B cell (primary cell): ENCODE measurements at regions of chr11 and their contacts with region 1.

Region 1: GRCh38 chr11:269146-269890 is 8.9 kb upstream of the NLRP6 start:
- DNase-seq: peak; percentile 96
- ATAC-seq: peak; percentile 66
- H3K4me3 ChIP-seq: peak overlapping the region; percentile 62 to 85 (median 72)
- H3K4me3 Mint-ChIP-seq: peak overlapping the region; percentile 91
- H3K27ac ChIP-seq: peak overlapping the region; percentile 96 to 98
- H3K27ac Mint-ChIP-seq: peak overlapping the region; percentile 94
- H3K4me1 ChIP-seq: peaks cover 25 to 32% of the 10 kb centered on the region in 2 donors
- H3K4me1 Mint-ChIP-seq: peaks cover 34% of the 10 kb centered on the region
- H3K27me3 ChIP-seq: no peaks in the 10 kb centered on the region
- H3K27me3 Mint-ChIP-seq: no peaks in the 10 kb centered on the region
- CTCF ChIP-seq: peak; percentile 33

Region 2: DNA sequence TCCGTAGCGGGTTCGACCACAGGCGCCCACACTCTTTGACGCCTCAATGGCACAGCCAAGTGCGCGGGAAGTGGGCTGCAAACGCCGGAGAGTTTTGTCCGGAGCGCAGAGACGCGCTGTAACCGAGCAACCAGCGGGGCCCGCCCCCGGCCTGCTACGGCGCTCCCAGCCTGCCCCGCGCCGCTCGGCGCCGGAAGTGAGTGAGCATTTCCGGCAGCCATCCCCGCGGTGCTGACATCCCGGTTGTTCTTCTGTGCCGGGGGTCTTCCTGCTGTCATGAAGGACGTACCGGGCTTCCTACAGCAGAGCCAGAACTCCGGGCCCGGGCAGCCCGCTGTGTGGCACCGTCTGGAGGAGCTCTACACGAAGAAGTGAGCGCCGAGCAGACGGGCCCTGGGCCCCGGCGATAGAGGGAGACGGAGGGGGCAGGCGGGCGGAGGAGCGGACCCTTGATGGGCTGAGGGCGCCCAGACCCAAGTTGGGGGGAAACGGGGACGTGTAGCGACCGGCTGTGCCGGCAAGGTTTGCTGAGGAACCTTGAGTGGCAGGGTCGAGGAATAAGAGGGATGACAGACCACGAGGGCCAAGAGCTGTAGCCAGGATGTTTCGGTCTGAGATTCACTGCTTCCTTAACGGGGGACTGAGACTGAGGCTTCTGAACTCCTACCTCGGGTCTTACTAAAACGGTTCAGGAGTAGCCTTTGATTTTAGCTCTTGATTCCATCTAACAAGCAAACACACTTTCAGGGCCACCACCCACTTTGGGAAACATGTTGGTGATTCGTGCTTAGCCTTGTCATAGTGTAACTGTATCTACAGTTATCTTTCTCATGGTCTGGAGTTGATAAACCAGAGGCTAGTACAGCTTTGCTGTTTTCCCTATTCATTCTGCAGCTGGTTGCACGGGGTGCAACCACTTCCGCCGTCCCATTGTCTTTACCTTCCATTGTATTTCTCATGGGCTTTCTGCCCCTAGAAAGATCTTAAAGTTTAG is 32.2 kb before region 1 on chr11 and contains the start of gene PSMD13:
- CTCF ChIA-PET with region 1: no interaction called
- POLR2A ChIA-PET with region 1: interaction called, 12 read pairs
- intact Hi-C with region 1: loop called (anchors 1 kb)
- DNase-seq: peak; percentile 91
- ATAC-seq: peak; percentile 77
- H3K4me3 ChIP-seq: peak within 1 kb of the TSS; percentile 89 to 98 (median 95)
- H3K4me3 Mint-ChIP-seq: peak within 1 kb of the TSS; percentile 99
- H3K27ac ChIP-seq: peak within 1 kb of the TSS; percentile 94 to 99
- H3K27ac Mint-ChIP-seq: peak within 1 kb of the TSS; percentile 100
- H3K4me1 ChIP-seq: peaks cover 18 to 22% of the 10 kb centered on the region in 2 donors
- H3K4me1 Mint-ChIP-seq: peaks cover 38% of the 10 kb centered on the region
- H3K27me3 ChIP-seq: no peaks in the 10 kb centered on the region
- H3K27me3 Mint-ChIP-seq: no peaks in the 10 kb centered on the region
- CTCF ChIP-seq: no peak
- total RNA-seq, gene PSMD13: 96.2 and 104 TPM in 2 replicates

Region 3: DNA sequence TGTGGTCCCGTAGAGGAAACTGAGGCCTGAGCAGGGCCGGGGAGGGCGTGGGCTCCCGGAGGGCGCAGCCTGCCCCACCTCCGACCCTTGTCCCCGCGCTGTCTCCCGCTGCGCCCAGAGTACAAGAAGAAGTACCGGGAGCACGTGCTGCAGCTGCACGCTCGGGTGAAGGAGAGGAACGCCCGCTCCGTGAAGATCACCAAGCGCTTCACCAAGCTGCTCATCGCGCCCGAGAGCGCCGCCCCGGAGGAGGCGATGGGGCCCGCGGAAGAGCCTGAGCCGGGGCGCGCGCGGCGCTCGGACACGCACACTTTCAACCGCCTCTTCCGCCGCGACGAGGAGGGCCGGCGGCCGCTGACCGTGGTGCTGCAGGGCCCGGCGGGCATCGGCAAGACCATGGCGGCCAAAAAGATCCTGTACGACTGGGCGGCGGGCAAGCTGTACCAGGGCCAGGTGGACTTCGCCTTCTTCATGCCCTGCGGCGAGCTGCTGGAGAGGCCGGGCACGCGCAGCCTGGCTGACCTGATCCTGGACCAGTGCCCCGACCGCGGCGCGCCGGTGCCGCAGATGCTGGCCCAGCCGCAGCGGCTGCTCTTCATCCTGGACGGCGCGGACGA is 10.8 kb after region 1 on chr11:
- CTCF ChIA-PET with region 1: interaction called, 17 read pairs
- POLR2A ChIA-PET with region 1: interaction called, 19 read pairs
- intact Hi-C with region 1: loop called (anchors 1 kb)
- DNase-seq: peak; percentile 81
- ATAC-seq: peak; percentile 69
- H3K4me3 ChIP-seq: peak overlapping the region in 4 of 5 experiments; percentile 29 to 57 (median 45)
- H3K4me3 Mint-ChIP-seq: peak overlapping the region; percentile 85
- H3K27ac ChIP-seq: no peak overlapping the region
- H3K27ac Mint-ChIP-seq: peak overlapping the region; percentile 81
- H3K4me1 ChIP-seq: peaks cover 36 to 39% of the 10 kb centered on the region in 2 donors
- H3K4me1 Mint-ChIP-seq: peaks cover 39% of the 10 kb centered on the region
- H3K27me3 ChIP-seq: peaks cover 0 to 45% (median 20%) of the 10 kb centered on the region in 4 experiments
- H3K27me3 Mint-ChIP-seq: peaks cover 28% of the 10 kb centered on the region
- CTCF ChIP-seq: no peak

Region 4: DNA sequence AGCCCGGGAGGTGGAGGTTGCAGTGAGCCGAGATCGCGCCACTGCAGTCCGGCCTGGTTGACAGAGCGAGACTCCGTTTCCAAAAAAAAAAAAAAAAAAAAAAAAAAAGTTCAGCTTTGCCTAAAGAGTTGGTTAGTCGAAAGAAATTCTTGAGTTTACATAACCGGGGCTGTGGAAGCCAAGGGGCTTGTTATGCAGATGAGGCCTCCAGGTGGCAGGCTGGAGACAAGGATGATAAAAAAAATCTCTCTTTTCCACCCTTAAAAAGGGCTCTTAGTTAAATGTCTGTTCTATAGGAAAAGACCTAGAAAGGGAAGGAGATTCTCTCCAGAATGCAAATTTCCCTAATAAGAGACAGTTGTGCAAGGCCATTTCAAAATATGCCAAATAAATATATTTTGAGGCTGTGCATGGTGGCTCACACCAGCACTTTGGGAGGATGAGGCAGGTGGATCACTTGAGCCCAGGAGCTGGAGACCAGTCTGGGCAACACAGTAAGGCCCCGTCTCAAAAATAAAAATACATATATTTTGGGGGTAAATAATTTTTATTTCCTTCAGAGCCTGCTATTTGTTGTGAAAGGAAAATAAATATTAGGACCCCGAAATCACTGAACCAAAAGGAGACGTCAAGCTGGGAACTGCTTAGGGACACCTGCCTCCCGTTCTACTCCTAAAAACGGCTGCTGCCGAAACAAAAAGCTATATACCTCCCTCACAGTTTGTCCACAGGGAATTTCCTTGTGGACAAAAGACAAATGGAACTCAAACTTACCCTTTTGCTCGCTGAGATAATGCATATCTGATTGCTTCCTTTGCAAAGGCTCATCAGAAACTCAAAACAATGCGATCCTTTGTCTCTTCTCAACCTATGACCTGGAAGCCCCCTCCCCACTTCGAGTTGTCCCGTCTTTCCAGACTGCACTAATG is 35.9 kb after region 1 on chr11:
- CTCF ChIA-PET with region 1: interaction called, 10 read pairs
- POLR2A ChIA-PET with region 1: interaction called, 11 read pairs
- intact Hi-C with region 1: loop called (anchors 5 kb)
- DNase-seq: peak; percentile 71
- ATAC-seq: peak; percentile 37
- H3K4me3 ChIP-seq: no peak overlapping the region
- H3K4me3 Mint-ChIP-seq: no peak overlapping the region
- H3K27ac ChIP-seq: no peak overlapping the region
- H3K27ac Mint-ChIP-seq: peak overlapping the region; percentile 73
- H3K4me1 ChIP-seq: peaks cover 28 to 56% of the 10 kb centered on the region in 2 donors
- H3K4me1 Mint-ChIP-seq: peaks cover 52% of the 10 kb centered on the region
- H3K27me3 ChIP-seq: peaks cover 0 to 2% (median 0%) of the 10 kb centered on the region in 4 experiments
- H3K27me3 Mint-ChIP-seq: no peaks in the 10 kb centered on the region
- CTCF ChIP-seq: peak; percentile 67